PC-9 (cell line): ENCODE measurements at regions of chr16 and their contacts with region 1.

Region 1: GRCh38 chr16:57863434-57864160 is 61.3 kb upstream of the KIFC3 start:
- DNase-seq: peak; percentile 64 to 78
- H3K4me3 ChIP-seq: no peak overlapping the region
- H3K27ac ChIP-seq: peak overlapping the region; percentile 41
- H3K4me1 ChIP-seq: peaks cover 40% of the 10 kb centered on the region
- H3K27me3 ChIP-seq: no peaks in the 10 kb centered on the region
- CTCF ChIP-seq: peak; percentile 63

Region 2: GRCh38 chr16:57576429-57576870 is 287.1 kb before region 1 on chr16:
- CTCF ChIA-PET with region 1: no interaction called
- POLR2A ChIA-PET with region 1: no interaction called
- intact Hi-C with region 1: loop called (anchors 10 kb)
- DNase-seq: peak; percentile 52 to 69
- H3K4me3 ChIP-seq: no peak overlapping the region
- H3K27ac ChIP-seq: no peak overlapping the region
- H3K4me1 ChIP-seq: no peaks in the 10 kb centered on the region
- H3K27me3 ChIP-seq: no peaks in the 10 kb centered on the region
- CTCF ChIP-seq: peak; percentile 95

Region 3: GRCh38 chr16:57757326-57757786 is 106.2 kb before region 1 on chr16:
- CTCF ChIA-PET with region 1: interaction called, 3 read pairs
- POLR2A ChIA-PET with region 1: no interaction called
- intact Hi-C with region 1: loop called (anchors 1 kb)
- DNase-seq: peak; percentile 59 to 91
- H3K4me3 ChIP-seq: no peak overlapping the region
- H3K27ac ChIP-seq: no peak overlapping the region
- H3K4me1 ChIP-seq: peaks cover 21% of the 10 kb centered on the region
- H3K27me3 ChIP-seq: no peaks in the 10 kb centered on the region
- CTCF ChIP-seq: peak; percentile 96

Region 4: DNA sequence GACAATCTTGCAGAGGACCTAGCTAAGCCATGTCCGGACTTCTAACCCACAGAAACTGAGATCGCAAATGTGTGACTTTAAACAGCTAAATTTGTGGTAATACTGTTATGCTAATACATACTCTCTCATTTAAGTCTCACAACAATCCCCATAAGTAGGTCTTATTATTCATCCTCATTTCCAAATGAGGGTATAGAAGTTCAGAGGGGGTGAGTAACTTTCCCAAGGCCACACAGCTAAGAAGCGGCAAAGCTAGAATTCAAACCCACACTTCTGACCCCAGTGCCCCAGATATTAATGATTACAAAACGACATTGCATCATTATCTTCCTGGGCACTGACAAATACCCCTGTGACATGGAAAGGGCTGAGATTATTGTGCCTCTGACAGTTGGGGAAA is 25.9 kb after region 1 on chr16:
- CTCF ChIA-PET with region 1: no interaction called
- POLR2A ChIA-PET with region 1: no interaction called
- intact Hi-C with region 1: no loop called
- DNase-seq: no peak
- H3K4me3 ChIP-seq: no peak overlapping the region
- H3K27ac ChIP-seq: no peak overlapping the region
- H3K4me1 ChIP-seq: peaks cover 34% of the 10 kb centered on the region
- H3K27me3 ChIP-seq: no peaks in the 10 kb centered on the region
- CTCF ChIP-seq: no peak